Calu3 (cell line): ENCODE measurements at regions of chr3 and their contacts with region 1.

Region 1: DNA sequence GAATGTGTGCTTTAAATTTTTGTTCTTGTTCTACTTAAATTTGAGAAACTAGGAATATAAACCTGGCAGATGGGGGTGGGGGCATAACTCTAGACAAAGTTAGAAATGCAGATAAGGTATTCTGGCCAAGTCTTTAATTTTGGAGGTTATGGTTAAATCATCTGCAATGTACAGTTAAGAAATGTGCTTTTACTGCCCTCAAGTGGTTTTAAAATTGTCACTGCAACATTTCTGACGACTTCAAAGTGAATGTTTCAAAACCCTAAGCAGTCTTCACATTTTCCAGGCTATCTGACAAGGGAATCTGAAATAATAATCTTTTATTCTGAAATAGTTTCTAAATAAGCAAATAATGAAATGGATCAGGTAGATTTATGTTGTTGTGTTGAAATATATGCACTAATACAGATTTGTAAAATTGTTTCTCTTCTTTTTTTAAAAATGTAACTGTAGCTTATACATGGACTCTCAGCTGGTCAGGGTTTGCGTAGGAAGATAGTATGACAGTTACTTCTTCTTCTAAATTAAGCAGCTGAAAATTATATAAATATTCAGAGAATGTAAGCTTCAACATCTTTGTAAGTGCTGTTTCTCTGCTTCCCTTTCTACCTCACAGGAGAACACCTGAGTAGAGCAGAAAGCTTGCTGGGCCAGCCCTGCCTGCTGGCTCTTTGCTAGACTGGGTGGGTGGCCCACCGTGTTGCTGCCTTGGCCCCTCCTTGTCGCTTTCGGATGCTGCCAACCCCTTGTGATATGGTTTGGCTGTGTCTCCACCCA is 45.0 kb downstream of the SUCNR1 start:
- DNase-seq: no peak
- H3K4me3 Mint-ChIP-seq: no peak overlapping the region
- H3K27ac Mint-ChIP-seq: no peak overlapping the region
- H3K4me1 Mint-ChIP-seq: no peaks in the 10 kb centered on the region
- H3K27me3 Mint-ChIP-seq: no peaks in the 10 kb centered on the region
- CTCF ChIP-seq: peak; percentile 64

Region 2: GRCh38 chr3:151227807-151228665 is 690.4 kb before region 1 on chr3:
- CTCF ChIA-PET with region 1: no interaction called
- intact Hi-C with region 1: loop called (anchors 5 kb)
- DNase-seq: peak; percentile 85
- H3K4me3 Mint-ChIP-seq: peak overlapping the region; percentile 31
- H3K27ac Mint-ChIP-seq: peak overlapping the region; percentile 7
- H3K4me1 Mint-ChIP-seq: peaks cover 23% of the 10 kb centered on the region
- H3K27me3 Mint-ChIP-seq: no peaks in the 10 kb centered on the region
- CTCF ChIP-seq: peak; percentile 94

Region 3: GRCh38 chr3:151439652-151440129 is 478.8 kb before region 1 on chr3:
- CTCF ChIA-PET with region 1: interaction called, 8 read pairs
- intact Hi-C with region 1: loop called (anchors 1 kb)
- DNase-seq: peak; percentile 66
- H3K4me3 Mint-ChIP-seq: no peak overlapping the region
- H3K27ac Mint-ChIP-seq: no peak overlapping the region
- H3K4me1 Mint-ChIP-seq: peaks cover 8% of the 10 kb centered on the region
- H3K27me3 Mint-ChIP-seq: no peaks in the 10 kb centered on the region
- CTCF ChIP-seq: peak; percentile 88

Region 4: DNA sequence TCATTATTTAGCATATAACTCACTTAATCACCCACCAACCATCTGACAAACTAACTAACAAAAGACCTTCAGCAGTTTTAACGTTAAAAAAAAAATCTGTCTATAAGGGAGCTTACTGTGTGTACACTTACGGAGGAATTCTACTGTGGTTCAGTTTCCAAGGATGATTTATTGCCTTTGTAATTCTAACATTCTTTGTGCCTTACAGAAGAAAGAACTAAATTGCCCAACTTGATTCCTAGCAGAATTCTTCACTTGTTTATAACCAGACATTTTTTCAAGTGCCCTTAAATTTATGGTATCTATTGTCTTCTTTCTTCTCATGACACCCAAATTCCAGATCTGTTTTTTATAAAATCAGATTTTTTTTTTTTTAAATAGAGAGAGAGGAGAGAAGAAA is 337.9 kb before region 1 on chr3:
- CTCF ChIA-PET with region 1: no interaction called
- intact Hi-C with region 1: loop called (anchors 10 kb)
- DNase-seq: no peak
- H3K4me3 Mint-ChIP-seq: no peak overlapping the region
- H3K27ac Mint-ChIP-seq: no peak overlapping the region
- H3K4me1 Mint-ChIP-seq: no peaks in the 10 kb centered on the region
- H3K27me3 Mint-ChIP-seq: no peaks in the 10 kb centered on the region
- CTCF ChIP-seq: no peak

Region 5: DNA sequence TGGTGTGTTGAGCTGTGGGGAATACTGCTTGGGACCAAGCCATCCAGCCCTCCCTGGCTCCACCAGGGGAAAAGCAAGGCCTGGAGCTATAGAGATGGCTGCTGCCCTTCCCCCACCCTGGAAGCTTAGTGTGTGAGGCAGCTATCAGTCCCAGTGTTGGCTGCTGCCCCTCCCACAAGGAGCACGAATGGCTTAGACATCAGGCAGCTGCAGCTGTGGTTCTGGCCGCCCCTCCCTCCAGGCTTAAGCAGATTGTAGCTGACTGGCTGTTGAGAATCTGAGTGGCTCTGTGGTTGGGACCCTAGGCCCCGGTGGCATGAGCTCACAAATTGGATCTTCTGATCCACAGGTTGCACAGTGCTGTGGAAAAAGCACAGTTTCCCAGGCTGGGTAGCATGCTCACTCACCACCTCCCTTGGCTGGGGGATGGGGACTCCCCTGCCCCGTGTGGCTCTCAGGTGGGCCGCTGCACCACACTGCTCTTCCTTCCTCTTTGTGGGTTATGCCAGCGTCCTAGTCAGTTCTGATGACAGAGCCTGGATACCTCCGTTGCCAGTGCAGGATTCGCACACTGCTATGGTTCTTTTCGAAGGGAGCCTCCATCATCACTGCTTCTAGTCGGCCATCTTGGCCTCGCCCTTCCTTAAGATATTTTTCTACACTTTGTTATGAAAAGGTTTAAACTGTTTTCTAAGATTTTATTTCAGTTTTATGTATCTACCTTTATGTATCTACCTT is 66.2 kb before region 1 on chr3:
- CTCF ChIA-PET with region 1: no interaction called
- intact Hi-C with region 1: loop called (anchors 5 kb)
- DNase-seq: no peak
- H3K4me3 Mint-ChIP-seq: no peak overlapping the region
- H3K27ac Mint-ChIP-seq: no peak overlapping the region
- H3K4me1 Mint-ChIP-seq: peaks cover 21% of the 10 kb centered on the region
- H3K27me3 Mint-ChIP-seq: no peaks in the 10 kb centered on the region
- CTCF ChIP-seq: no peak